ENCODE measurements at regions of chrX and their contacts with region 1.

Region 1: GRCh38 chrX:20530406-20530921 is 263.8 kb upstream of the RPS6KA3 start:
- DNase-seq: peak; percentile 47 to 52
- H3K4me3 ChIP-seq: peak overlapping the region; percentile 46; the same call in 1 of the 2 replicates
- H3K27ac ChIP-seq: no peak overlapping the region
- H3K4me1 ChIP-seq: peaks cover 15% of the 10 kb centered on the region
- H3K27me3 ChIP-seq: no peaks in the 10 kb centered on the region
- CTCF ChIP-seq: peak; percentile 85

Region 2: DNA sequence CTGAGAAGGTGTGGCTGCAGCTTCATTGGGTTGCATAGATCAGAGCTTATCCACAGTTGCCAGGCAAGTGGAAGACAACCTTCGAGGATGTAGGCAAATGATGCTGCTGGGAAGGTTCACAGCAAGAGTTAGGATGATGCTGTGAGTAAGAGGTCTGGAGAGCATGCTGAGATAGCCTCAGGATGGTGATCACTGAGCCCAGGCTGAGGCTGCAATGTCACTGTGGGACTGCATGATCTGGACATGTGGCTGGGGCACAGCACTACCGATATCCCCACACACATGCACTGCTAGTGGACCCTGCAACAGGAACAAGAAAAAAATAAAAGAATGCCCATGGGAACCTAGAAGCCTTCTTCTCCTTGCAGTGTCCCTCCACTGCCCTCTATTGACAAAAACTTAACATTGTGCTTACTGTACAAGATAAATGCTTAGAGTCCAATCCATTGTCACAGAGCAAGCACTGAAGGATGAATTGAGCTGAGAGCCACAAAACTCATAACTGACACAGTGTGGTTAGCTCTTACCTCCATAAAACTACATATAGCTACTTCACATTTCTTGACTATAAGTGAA is 949.3 kb after region 1 on chrX:
- CTCF ChIA-PET with region 1: no interaction called
- POLR2A ChIA-PET with region 1: no interaction called
- intact Hi-C with region 1: loop called (anchors 1 kb)
- DNase-seq: peak; percentile 2 to 35
- H3K4me3 ChIP-seq: no peak overlapping the region
- H3K27ac ChIP-seq: no peak overlapping the region
- H3K4me1 ChIP-seq: no peaks in the 10 kb centered on the region
- H3K27me3 ChIP-seq: no peaks in the 10 kb centered on the region
- CTCF ChIP-seq: peak; percentile 63

Region 3: GRCh38 chrX:21725496-21725895 is 1195.0 kb after region 1 on chrX:
- CTCF ChIA-PET with region 1: interaction called, 3 read pairs
- POLR2A ChIA-PET with region 1: no interaction called
- intact Hi-C with region 1: loop called (anchors 5 kb)
- DNase-seq: no peak
- H3K4me3 ChIP-seq: no peak overlapping the region
- H3K27ac ChIP-seq: no peak overlapping the region
- H3K4me1 ChIP-seq: no peaks in the 10 kb centered on the region
- H3K27me3 ChIP-seq: no peaks in the 10 kb centered on the region
- CTCF ChIP-seq: peak; percentile 63

Region 4: DNA sequence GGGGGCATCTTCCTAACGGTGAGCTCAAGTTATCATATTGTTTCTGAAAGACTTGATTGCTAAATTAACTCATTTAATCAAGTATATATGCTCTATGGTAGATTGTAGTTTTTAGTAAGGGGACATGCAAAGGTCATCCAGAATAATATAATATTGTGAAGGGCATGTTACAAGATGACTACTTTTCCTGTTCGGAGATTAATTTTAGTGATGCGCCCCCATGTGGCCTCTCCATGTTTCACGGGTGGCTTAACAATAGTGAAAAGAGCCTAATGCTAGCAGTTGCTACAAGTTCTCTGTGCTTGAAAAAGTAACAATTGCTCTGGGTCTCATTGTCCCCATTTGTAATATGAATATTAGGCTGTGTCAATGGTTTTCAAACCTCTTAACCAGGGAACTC is 1215.3 kb after region 1 on chrX:
- CTCF ChIA-PET with region 1: no interaction called
- POLR2A ChIA-PET with region 1: no interaction called
- intact Hi-C with region 1: loop called (anchors 1 kb)
- DNase-seq: peak in 1 of 2 experiments; percentile 24
- H3K4me3 ChIP-seq: no peak overlapping the region
- H3K27ac ChIP-seq: no peak overlapping the region
- H3K4me1 ChIP-seq: no peaks in the 10 kb centered on the region
- H3K27me3 ChIP-seq: no peaks in the 10 kb centered on the region
- CTCF ChIP-seq: peak; percentile 68